ENCODE measurements at regions of chr10 and their contacts with region 1.

Region 1: GRCh38 chr10:102904346-102904745 is 13.7 kb upstream of the CNNM2 start:
- DNase-seq: no peak
- H3K4me3 Mint-ChIP-seq: no peak overlapping the region
- H3K27ac Mint-ChIP-seq: no peak overlapping the region
- H3K4me1 Mint-ChIP-seq: no peaks in the 10 kb centered on the region
- H3K27me3 Mint-ChIP-seq: no peaks in the 10 kb centered on the region
- CTCF ChIP-seq: no peak

Region 2: DNA sequence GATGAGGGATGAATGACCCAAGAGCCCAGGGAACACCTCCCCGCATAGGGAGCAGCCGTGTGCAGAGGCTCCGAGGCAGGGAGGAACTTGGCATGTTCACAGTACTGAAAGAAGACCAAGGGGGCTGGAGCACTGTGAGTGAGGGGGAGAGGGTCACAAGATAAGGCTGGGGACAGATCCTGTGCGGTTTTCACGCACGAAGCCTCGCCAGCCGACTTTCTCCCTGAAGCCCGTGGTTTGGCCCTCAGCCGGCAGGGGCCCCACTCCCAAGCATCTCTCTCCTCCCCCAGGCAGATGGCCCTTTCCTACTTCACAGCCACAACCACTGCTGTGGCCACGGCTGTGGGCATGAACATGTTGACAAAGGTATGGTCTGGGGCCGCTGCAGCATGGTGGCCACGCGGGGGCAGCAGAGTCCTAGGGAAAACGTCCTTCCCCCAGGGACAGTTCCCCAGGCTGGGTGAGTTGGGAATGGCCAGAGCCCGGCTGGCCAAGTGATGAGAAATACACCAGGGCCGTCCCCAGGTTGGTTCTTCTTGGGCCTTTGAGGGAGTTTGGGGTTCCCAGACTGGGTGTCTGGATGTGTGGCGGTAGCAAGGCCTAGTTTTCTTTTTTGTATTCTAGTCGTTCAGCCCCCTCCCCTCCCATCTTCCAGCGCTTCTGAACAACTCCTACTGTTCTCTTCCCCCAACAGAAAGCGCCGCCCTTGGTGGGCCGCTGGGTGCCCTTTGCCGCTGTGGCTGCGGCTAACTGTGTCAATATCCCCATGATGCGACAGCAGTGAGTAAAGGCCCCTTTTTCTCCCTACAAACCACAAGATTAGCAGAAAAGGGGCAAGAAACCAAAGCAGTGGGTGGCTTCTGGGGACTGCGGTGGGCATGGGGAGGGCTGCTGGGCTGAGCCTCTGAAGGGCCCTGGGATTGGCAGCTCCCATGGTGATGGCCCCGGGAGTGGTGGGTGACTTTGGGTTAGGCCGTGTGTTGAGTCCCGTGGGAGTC is 175.0 kb before region 1 on chr10:
- CTCF ChIA-PET with region 1: interaction called, 48 read pairs
- POLR2A ChIA-PET with region 1: interaction called, 5 read pairs
- intact Hi-C with region 1: loop called (anchors 1 kb)
- DNase-seq: peak; percentile 75
- H3K4me3 Mint-ChIP-seq: no peak overlapping the region
- H3K27ac Mint-ChIP-seq: no peak overlapping the region
- H3K4me1 Mint-ChIP-seq: peaks cover 6% of the 10 kb centered on the region
- H3K27me3 Mint-ChIP-seq: no peaks in the 10 kb centered on the region
- CTCF ChIP-seq: peak; percentile 81

Region 3: GRCh38 chr10:102735065-102735562 is 169.2 kb before region 1 on chr10:
- CTCF ChIA-PET with region 1: interaction called, 20 read pairs
- POLR2A ChIA-PET with region 1: interaction called, 5 read pairs
- intact Hi-C with region 1: no loop called
- DNase-seq: no peak
- H3K4me3 Mint-ChIP-seq: no peak overlapping the region
- H3K27ac Mint-ChIP-seq: peak overlapping the region; percentile 76
- H3K4me1 Mint-ChIP-seq: no peaks in the 10 kb centered on the region
- H3K27me3 Mint-ChIP-seq: no peaks in the 10 kb centered on the region
- CTCF ChIP-seq: no peak

Region 4: GRCh38 chr10:102865620-102866019 is 38.7 kb before region 1 on chr10:
- CTCF ChIA-PET with region 1: interaction called, 14 read pairs
- POLR2A ChIA-PET with region 1: no interaction called
- intact Hi-C with region 1: no loop called
- DNase-seq: no peak
- H3K4me3 Mint-ChIP-seq: no peak overlapping the region
- H3K27ac Mint-ChIP-seq: no peak overlapping the region
- H3K4me1 Mint-ChIP-seq: no peaks in the 10 kb centered on the region
- H3K27me3 Mint-ChIP-seq: no peaks in the 10 kb centered on the region
- CTCF ChIP-seq: no peak

Region 5: GRCh38 chr10:102980617-102981016 is 76.3 kb after region 1 on chr10:
- CTCF ChIA-PET with region 1: no interaction called
- POLR2A ChIA-PET with region 1: no interaction called
- intact Hi-C with region 1: no loop called
- DNase-seq: no peak
- H3K4me3 Mint-ChIP-seq: no peak overlapping the region
- H3K27ac Mint-ChIP-seq: no peak overlapping the region
- H3K4me1 Mint-ChIP-seq: peaks cover 5% of the 10 kb centered on the region
- H3K27me3 Mint-ChIP-seq: no peaks in the 10 kb centered on the region
- CTCF ChIP-seq: no peak

Region 6: DNA sequence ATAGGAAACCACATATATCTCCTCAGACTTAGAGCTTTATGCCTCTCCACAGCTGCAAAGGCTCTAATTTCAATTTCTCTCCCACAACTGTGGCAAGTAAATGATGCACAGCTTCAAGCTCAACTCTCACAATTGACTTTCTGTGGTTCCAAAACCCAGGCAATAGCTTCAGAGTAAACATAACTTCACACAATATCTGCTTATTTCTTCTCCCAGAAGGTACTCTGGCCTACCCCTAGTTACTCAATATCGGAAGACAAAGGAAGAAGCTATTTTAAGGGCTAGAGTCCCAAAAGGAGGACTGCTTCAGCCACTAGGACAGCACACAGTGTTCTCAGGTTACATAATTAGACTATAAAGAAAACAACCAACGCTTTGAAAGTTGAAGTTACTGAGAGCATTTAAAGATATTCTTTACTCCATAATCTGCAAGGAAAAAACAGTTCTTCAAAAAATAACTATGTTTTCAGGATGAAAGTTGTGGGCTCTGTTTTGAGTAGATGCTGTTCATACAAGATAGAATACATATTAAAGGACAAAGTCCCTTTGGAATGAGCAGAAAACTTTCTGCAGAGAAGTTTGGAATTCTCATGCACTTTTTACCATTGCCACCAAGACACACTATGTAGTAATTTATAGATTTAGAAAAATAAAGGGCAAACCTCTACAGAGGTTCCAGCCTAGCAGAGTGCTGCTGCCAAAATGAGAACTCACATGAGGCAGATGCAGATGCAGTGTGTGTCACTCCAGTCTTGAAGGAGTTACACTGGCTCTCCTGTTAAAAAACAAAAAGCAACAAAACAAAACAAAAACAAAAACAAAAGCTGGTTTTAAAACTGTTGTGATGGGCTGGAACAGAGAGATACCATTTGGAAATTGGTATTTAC is 206.9 kb after region 1 on chr10:
- CTCF ChIA-PET with region 1: no interaction called
- POLR2A ChIA-PET with region 1: no interaction called
- intact Hi-C with region 1: no loop called
- DNase-seq: peak; percentile 59
- H3K4me3 Mint-ChIP-seq: no peak overlapping the region
- H3K27ac Mint-ChIP-seq: no peak overlapping the region
- H3K4me1 Mint-ChIP-seq: peaks cover 13% of the 10 kb centered on the region
- H3K27me3 Mint-ChIP-seq: no peaks in the 10 kb centered on the region
- CTCF ChIP-seq: no peak

Region 7: DNA sequence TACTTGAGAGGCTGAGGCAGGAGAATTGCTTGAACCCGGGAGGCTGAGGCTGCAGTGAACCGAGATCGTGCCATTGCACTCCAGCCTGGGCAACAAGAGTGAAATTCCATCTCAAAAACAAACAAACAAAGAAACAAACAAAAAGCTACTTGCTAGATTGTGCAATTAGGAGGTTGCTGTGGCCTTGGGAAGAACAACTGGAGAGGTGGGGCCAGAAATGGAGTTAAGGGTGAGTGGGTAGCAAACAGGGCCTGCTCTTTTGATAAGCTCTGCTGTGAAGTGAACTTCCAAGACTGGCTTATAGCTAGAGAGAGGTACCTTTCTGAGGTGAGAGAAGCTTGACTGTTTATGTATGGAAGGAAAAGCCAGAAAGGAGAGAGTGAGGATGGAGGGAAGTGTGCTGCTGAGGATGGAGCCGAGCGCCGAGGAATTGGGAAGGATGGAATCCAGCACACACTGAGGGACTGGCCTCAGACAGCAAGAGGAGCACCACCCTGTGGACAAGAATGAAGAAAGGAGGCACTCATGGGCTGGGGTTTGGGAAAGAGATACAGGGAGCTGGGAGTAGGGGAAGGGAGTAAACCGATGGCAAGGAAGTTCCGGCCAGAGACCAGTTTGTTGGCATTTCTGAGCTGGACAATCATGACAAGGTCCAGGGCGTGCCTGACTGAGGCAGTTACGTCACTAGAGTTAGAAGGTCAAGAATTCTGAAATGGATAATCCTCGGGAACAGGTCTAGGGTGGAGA is 334.3 kb after region 1 on chr10:
- CTCF ChIA-PET with region 1: no interaction called
- POLR2A ChIA-PET with region 1: no interaction called
- intact Hi-C with region 1: no loop called
- DNase-seq: peak; percentile 48
- H3K4me3 Mint-ChIP-seq: no peak overlapping the region
- H3K27ac Mint-ChIP-seq: no peak overlapping the region
- H3K4me1 Mint-ChIP-seq: peaks cover 25% of the 10 kb centered on the region
- H3K27me3 Mint-ChIP-seq: no peaks in the 10 kb centered on the region
- CTCF ChIP-seq: no peak

Region 8: DNA sequence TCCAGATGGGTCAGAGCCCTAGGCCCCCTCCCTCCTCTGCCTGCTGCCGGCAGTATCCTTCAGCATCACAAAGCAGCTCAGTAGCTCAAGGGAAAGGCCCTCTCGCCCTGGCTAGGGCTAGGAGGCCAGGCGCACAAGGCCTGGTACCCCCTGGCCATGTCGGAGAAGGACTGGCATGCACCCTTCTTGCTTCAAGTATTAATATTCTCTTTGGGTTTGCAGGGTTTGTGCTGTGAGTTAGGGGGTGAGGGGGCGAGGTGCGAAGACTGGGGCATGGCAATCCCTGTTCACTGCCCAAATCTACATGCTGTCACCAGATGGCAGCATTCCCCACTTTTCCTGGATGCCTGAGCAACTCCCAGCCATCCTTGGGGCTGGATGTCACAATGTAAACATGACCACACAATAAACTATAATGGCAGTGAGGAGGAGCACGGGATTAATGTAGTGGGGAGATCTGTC is 694.3 kb after region 1 on chr10:
- CTCF ChIA-PET with region 1: no interaction called
- POLR2A ChIA-PET with region 1: no interaction called
- intact Hi-C with region 1: no loop called
- DNase-seq: peak; percentile 77
- H3K4me3 Mint-ChIP-seq: no peak overlapping the region
- H3K27ac Mint-ChIP-seq: no peak overlapping the region
- H3K4me1 Mint-ChIP-seq: peaks cover 6% of the 10 kb centered on the region
- H3K27me3 Mint-ChIP-seq: no peaks in the 10 kb centered on the region
- CTCF ChIP-seq: peak; percentile 69

Measured in MCF 10A (cell line).